Left lung (tissue), 14 donors: ENCODE measurements at regions of chr17 and their contacts with region 1.

Region 1: GRCh38 chr17:75904749-75905521 is at the start of gene MRPL38:
- DNase-seq: peak; percentile 84 to 98 (median 95)
- ATAC-seq: peak; percentile 92
- H3K4me3 ChIP-seq: peak within 1 kb of the TSS; percentile 87 to 91
- H3K27ac ChIP-seq: peak within 1 kb of the TSS; percentile 86 to 97
- H3K4me1 ChIP-seq: peaks cover 14 to 31% of the 10 kb centered on the region in 2 donors
- H3K27me3 ChIP-seq: no peaks in the 10 kb centered on the region
- CTCF ChIP-seq: peak; percentile 99
- polyA plus RNA-seq, gene MRPL38: 61.1 to 86.4 (median 71.7) TPM

Region 2: DNA sequence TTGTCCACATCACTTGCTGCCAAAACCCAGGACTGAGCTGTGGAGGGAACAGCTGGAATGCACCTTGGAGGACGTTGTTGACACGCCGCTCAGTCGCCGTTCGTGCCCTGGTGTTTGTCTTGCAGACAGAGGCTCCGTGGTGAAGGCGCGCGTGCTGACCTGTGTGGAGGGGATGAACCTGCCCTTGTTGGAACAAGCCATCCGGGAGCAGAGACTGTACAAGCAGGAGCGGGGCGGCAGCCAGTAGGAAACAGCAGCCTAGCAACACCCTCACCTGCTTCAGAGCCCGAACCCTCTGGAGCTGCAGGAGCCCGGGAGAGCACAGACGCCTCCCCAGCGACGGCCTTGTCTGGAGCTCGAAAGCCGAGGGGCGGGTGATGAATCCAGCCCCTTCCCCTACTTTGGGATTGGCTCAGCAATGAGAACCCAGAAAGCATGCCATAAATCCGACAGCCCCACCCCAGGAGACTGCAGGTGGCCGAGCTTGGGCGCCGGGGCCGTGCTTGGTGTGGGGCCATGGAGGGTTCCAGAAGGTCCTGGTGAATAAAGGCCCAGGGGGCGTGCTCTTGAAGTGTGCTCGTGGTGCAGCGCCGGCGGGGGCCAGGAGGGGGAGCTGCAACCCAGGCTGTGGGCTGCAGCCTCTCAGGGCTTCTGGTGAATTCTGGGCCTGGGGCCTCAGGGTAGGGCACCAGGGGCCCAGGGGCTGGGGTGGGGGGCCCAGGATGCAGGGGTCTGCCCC is 95.2 kb after region 1 on chr17:
- intact Hi-C with region 1: loop called in 1 of 2 experiments (anchors 5 kb)
- DNase-seq: peak in 1 of 4 donors; percentile 89
- ATAC-seq: peak; percentile 51
- H3K4me3 ChIP-seq: no peak overlapping the region
- H3K27ac ChIP-seq: no peak overlapping the region
- H3K4me1 ChIP-seq: peaks cover 9 to 25% of the 10 kb centered on the region in 2 donors
- H3K27me3 ChIP-seq: no peaks in the 10 kb centered on the region
- CTCF ChIP-seq: peak; percentile 35 to 68